Posterior vena cava (tissue), 2 donors: ENCODE measurements at regions of chr1 and their contacts with region 1.

Region 1: GRCh38 chr1:212600980-212601379 is 7.6 kb upstream of the ATF3 start:
- DNase-seq: no peak

Region 2: DNA sequence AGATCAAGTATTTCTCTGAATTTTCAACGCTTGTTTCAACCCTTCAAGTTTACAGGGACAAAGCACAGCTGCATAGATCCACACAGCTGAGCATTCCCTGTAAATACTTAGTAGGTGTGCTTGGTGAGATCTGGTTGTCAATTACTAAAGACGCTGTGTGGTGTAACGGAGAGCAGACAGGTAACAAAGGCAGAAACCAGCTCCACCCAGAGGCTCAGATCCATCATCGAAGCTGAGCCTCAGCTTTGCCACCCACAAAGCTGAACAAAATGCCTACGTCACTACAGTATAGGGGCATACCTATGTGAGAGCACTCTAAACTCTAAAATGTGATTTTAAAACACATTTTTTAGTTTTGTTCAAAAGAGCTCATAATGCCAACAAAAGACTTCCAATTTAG is 225.0 kb before region 1 on chr1:
- intact Hi-C with region 1: loop called in 1 of 2 experiments (anchors 5 kb)
- DNase-seq: no peak

Region 3: GRCh38 chr1:212566522-212567479 is 34.2 kb before region 1 on chr1:
- intact Hi-C with region 1: loop called (anchors 5 kb)
- DNase-seq: no peak